ENCODE measurements at regions of chr17 and their contacts with region 1.

Region 1: DNA sequence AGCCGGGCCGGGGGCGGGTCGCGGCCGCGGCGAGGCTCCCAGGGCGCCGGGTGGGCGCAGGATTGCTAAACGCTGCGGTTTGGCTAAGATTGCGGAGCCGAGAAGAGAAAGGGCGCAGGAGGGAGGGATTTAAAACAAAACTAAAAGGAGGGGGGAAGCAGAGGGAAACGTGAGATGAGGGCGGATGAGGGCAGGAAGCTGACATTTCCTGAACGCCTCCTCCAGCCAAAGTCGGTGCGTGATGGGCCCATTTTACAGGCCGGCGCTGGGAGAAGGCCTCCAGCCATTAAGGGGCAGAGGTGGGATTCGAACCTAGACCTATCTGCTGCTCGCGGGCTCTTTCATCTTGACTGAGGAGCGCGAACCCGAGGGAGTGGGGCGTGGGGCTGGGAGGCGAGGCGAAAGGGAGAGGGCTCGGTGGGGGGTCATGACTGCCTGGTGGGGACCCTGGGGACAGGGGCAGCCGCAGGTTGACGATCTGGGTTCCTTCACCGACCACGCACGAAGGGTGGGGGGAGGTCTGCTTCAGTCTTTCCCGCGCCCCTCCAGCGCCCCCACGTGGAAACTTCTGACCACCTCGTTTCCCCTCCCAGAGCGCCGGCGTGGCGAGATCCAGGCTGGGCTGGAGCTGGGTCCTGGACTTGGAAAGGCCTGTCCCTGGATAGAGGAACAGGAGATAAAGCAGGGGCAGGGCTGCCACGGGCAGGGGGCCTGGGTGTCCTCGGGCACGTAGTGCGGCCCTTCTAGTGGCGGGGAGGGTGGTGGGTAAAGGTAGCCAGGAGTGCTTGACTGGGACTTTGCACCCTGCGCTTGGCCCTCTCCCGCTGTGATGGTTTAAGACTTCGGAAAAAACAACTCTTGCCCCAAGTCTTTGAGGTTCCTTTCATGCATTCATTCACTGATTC is 3.8 kb upstream of the TAC4 start:
- DNase-seq: peak; percentile 84 to 92 (median 92)
- ATAC-seq: peak; percentile 82 to 84
- H3K4me3 ChIP-seq: peak overlapping the region; percentile 73
- H3K27ac ChIP-seq: no peak overlapping the region
- H3K4me1 ChIP-seq: no peaks in the 10 kb centered on the region
- H3K27me3 ChIP-seq: no peaks in the 10 kb centered on the region

Region 2: GRCh38 chr17:49567871-49568694 is 283.6 kb before region 1 on chr17:
- intact Hi-C with region 1: loop called in 3 of 4 experiments (anchors 5 to 10 kb)
- DNase-seq: peak; percentile 91 to 96 (median 96)
- ATAC-seq: peak; percentile 76 to 82
- H3K4me3 ChIP-seq: peak overlapping the region; percentile 15
- H3K27ac ChIP-seq: peak overlapping the region; percentile 31
- H3K4me1 ChIP-seq: peaks cover 8% of the 10 kb centered on the region
- H3K27me3 ChIP-seq: no peaks in the 10 kb centered on the region

Region 3: DNA sequence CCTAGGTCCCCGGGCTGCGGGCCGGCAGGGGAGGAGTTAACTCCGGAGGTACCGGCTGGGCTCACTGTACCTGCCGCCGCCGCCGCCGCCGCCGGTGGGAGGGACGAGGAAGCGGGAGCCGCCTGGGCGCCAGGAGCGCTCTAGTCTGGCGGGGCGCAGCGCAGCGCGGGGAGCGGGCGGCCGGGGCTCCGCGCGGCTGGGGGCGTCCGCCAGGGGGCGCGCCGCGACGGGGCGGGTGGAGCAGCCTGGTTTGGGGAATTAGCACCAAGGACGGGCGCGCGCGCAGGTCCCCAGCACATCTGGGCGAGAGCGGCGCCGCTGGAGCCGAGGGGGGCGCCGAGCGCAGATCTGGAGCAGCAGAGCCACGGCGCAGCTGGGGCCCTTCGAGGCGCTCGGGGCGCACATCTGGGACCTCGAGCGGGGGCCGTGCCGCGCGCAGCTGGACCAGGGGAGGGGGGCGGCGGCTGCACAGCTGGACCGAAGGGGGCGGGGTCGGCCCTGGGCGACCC is 276.0 kb before region 1 on chr17 and contains the start of gene NXPH3:
- intact Hi-C with region 1: loop called in 1 of 4 experiments (anchors 5 kb)
- DNase-seq: peak; percentile 72 to 91 (median 89)
- ATAC-seq: peak; percentile 47 to 51
- H3K4me3 ChIP-seq: peak within 1 kb of the TSS; percentile 72
- H3K27ac ChIP-seq: peak within 1 kb of the TSS; percentile 66
- H3K4me1 ChIP-seq: peaks cover 5% of the 10 kb centered on the region
- H3K27me3 ChIP-seq: no peaks in the 10 kb centered on the region
- total RNA-seq, gene NXPH3: 3.8 to 6.5 (median 4.9) TPM

Region 4: DNA sequence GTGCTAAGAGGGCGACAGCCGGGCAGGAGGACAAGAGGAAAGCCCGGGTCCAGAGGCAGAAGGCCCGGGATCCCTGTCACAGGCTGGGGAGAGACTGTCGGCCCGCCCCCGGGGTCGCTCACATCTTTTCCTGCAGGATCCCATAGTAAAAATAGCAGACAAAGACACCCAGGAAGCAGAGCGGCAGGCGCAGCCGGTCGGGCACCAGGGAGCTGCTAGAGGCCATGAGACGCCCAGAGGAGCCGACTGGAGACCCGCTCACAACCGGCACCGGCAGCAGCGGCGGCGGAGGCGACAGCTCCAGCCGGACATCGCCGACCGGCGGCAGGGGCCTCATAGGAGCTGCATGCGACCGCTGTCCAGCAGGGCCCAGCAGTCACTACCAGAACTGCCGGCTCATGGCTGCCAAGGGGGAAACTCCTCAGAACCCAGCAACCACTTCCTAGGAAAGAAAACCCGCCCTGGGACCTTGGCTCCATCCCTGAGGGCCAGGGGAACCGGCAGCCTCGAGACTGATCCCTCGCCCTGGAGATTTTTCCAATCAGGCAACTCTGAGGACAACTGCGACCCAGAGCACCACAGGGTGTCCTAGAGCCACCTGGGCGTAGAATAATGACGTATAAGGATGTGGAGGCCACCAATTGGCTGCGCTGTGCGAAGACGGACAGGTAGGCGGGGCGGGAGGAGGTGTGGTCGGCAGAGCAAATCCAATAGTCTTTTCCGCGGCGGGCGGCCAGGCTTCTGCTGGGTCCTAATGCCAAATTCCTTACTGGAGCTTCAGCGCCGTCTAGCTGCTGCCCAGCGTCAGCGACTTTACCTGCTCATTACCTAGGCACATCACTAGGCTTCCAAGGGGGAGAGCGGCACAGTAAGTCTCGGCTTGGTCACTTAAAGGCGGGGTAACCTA is 143.8 kb before region 1 on chr17 and contains the start of gene SLC35B1:
- intact Hi-C with region 1: loop called (anchors 5 to 10 kb)
- DNase-seq: peak; percentile 99 to 100 (median 100)
- ATAC-seq: peak; percentile 99
- H3K4me3 ChIP-seq: peak within 1 kb of the TSS; percentile 92
- H3K27ac ChIP-seq: peak within 1 kb of the TSS; percentile 96
- H3K4me1 ChIP-seq: peaks cover 3% of the 10 kb centered on the region
- H3K27me3 ChIP-seq: no peaks in the 10 kb centered on the region
- total RNA-seq, gene SLC35B1: 48.6 to 75.5 (median 56.2) TPM

Region 5: GRCh38 chr17:49715717-49716279 is 135.8 kb before region 1 on chr17:
- intact Hi-C with region 1: loop called in 1 of 4 experiments (anchors 10 kb)
- DNase-seq: no peak
- ATAC-seq: peak; percentile 25 to 37
- H3K4me3 ChIP-seq: no peak overlapping the region
- H3K27ac ChIP-seq: peak overlapping the region; percentile 81
- H3K4me1 ChIP-seq: peaks cover 3% of the 10 kb centered on the region
- H3K27me3 ChIP-seq: no peaks in the 10 kb centered on the region

Measured in right cardiac atrium (tissue), 5 donors.